Ascending aorta (tissue), 2 donors: ENCODE measurements at regions of chr3 and their contacts with region 1.

Region 1: DNA sequence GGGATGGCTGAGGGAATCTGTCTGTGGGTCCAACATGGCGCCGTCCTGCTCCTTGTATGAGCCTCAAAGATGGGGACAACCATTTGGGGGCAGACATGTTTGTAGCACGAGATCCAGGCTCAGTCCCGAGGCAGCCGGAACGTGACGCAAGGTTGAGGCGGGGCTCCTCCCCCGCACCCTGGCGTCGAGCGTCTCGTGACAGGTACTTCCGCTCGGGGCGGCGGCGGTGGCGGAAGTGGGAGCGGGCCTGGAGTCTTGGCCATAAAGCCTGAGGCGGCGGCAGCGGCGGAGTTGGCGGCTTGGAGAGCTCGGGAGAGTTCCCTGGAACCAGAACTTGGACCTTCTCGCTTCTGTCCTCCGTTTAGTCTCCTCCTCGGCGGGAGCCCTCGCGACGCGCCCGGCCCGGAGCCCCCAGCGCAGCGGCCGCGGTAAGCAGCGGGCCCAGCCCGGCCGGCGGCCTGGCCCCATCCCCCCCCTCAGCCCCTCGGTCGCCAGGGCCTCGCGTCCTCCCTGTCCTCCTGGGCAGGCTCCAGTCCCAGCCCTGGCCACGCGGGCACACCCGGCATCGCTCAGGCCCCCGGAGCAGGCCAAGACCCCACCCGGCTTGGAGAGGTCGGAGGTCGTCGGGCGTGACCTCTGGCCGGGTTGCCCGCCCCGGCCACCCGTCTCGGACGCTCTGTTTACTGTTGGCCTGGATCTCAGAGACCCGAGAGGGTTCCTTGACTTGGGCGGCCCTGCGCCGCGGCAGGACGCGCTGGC is at the start of gene RAB7A:
- DNase-seq: peak; percentile 94 to 99
- H3K4me3 ChIP-seq: peak within 1 kb of the TSS; percentile 89 to 97
- H3K27ac ChIP-seq: peak within 1 kb of the TSS; percentile 94 to 95
- H3K4me1 ChIP-seq: peaks cover 0 to 24% of the 10 kb centered on the region in 2 donors
- H3K27me3 ChIP-seq: no peaks in the 10 kb centered on the region
- CTCF ChIP-seq: no peak
- total RNA-seq, gene RAB7A: 90.3 TPM

Region 2: GRCh38 chr3:128051837-128052594 is 674.1 kb before region 1 on chr3 and contains the start of gene SEC61A1:
- intact Hi-C with region 1: loop called (anchors 5 kb)
- DNase-seq: peak; percentile 81 to 96
- H3K4me3 ChIP-seq: peak within 1 kb of the TSS; percentile 94 to 98
- H3K27ac ChIP-seq: peak within 1 kb of the TSS; percentile 96
- H3K4me1 ChIP-seq: peaks cover 15 to 29% of the 10 kb centered on the region in 2 donors
- H3K27me3 ChIP-seq: no peaks in the 10 kb centered on the region
- CTCF ChIP-seq: peak in 1 of 3 experiments; percentile 4
- total RNA-seq, gene SEC61A1: 193 TPM

Region 3: DNA sequence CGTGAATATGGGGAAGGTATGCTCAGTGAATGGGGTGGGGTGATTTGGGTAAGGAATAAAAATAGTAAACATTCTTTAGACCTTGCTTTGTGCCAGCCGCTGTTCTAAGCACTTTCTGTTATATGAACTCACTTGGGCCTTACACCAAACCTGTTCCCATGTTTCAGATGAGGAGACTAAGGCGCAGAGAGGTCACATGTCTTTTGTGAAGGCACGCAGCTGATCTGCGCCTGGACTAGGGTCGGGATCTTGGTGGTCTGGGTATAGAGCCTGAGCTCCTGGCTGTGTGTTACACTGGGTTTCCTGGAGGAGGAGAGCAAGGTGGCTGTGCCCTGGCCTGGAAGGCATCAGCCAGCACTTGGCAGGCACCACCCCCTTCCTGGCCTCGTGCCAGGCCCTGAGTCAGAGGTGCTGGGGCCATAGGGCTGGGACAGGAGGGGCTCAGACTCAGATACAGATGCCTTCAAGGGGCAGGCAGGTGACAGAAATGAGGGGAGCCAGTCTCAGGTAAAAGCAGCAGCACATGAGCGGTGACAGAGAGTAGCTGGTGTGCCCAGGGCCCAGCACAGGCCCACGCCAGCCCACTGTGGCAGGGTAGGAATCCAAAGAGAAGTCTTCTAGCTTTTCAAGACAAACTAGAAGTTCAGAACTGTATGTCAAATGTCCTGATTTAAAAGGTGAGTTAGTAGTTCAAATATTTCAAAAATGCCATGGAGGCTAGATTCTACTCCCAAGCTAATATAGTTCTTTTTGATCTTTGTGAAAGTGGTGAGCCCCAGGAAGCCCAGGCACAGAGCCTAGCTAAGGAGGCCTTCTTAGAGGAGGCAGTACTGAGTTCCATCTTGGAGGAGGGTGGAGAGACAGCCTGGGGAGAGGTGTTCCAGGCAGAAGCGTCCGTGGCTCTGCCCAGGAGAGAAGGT is 342.5 kb before region 1 on chr3:
- intact Hi-C with region 1: loop called (anchors 5 kb)
- DNase-seq: peak; percentile 53 to 86
- H3K4me3 ChIP-seq: no peak overlapping the region
- H3K27ac ChIP-seq: peak overlapping the region; percentile 79 to 83
- H3K4me1 ChIP-seq: peaks cover 16 to 47% of the 10 kb centered on the region in 2 donors
- H3K27me3 ChIP-seq: no peaks in the 10 kb centered on the region
- CTCF ChIP-seq: no peak

Region 4: GRCh38 chr3:128650096-128651050 is 75.7 kb before region 1 on chr3 and contains the start of gene RPN1:
- intact Hi-C with region 1: loop called (anchors 1 kb)
- DNase-seq: peak; percentile 87 to 98
- H3K4me3 ChIP-seq: peak within 1 kb of the TSS; percentile 99 to 100
- H3K27ac ChIP-seq: peak within 1 kb of the TSS; percentile 96 to 99
- H3K4me1 ChIP-seq: peaks cover 0 to 10% of the 10 kb centered on the region in 2 donors
- H3K27me3 ChIP-seq: no peaks in the 10 kb centered on the region
- CTCF ChIP-seq: no peak
- total RNA-seq, gene RPN1: 226 TPM

Region 5: GRCh38 chr3:128698211-128699064 is 27.7 kb before region 1 on chr3:
- intact Hi-C with region 1: no loop called
- DNase-seq: no peak
- H3K4me3 ChIP-seq: peak overlapping the region; percentile 66 to 68
- H3K27ac ChIP-seq: peak overlapping the region; percentile 66 to 92
- H3K4me1 ChIP-seq: no peaks in the 10 kb centered on the region
- H3K27me3 ChIP-seq: no peaks in the 10 kb centered on the region
- CTCF ChIP-seq: no peak

Region 6: GRCh38 chr3:128794770-128795649 is 68.9 kb after region 1 on chr3:
- intact Hi-C with region 1: loop called (anchors 5 kb)
- DNase-seq: peak in 1 of 2 donors; percentile 75
- H3K4me3 ChIP-seq: no peak overlapping the region
- H3K27ac ChIP-seq: no peak overlapping the region
- H3K4me1 ChIP-seq: peaks cover 0 to 11% of the 10 kb centered on the region in 2 donors
- H3K27me3 ChIP-seq: no peaks in the 10 kb centered on the region
- CTCF ChIP-seq: peak; percentile 58 to 78 (median 68)